Endothelial cell of umbilical vein (primary cell): ENCODE measurements at regions of chr2 and their contacts with region 1.

Region 1: DNA sequence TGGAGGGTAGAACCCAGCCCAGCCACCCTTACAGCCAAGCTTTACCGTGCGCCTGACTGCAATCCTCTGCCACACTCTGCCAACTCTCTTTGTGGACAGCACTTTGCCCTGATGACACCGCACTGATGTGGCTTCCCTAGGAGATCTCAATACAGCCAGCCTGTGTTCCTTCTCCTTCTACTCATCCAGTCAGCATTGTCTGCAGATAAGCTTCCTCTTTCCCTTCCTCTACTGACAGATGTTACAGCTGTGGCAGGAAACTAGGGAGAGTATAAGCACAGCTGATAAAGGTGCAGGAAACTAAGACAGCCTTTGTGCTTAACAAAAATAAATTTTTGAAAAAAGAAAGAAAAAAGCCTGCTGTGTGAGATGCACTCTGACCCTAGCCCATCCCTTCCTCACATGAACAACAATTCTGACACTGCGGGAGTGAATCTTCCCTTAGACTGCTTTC is 25.0 kb downstream of the CEP68 start:
- DNase-seq: peak; percentile 84
- H3K4me3 ChIP-seq: no peak overlapping the region
- H3K27ac ChIP-seq: peak overlapping the region; percentile 37
- H3K4me1 ChIP-seq: peaks cover 17% of the 10 kb centered on the region
- H3K27me3 ChIP-seq: no peaks in the 10 kb centered on the region
- CTCF ChIP-seq: no peak
- POLR2A ChIP-seq: peak; percentile 63

Region 2: GRCh38 chr2:64797881-64798575 is 283.2 kb before region 1 on chr2:
- CTCF ChIA-PET with region 1: no interaction called
- POLR2A ChIA-PET with region 1: no interaction called
- dilution Hi-C with region 1: no loop called
- intact Hi-C with region 1: no loop called
- DNase-seq: peak; percentile 77
- H3K4me3 ChIP-seq: no peak overlapping the region
- H3K27ac ChIP-seq: peak overlapping the region; percentile 30
- H3K4me1 ChIP-seq: peaks cover 65% of the 10 kb centered on the region
- H3K27me3 ChIP-seq: no peaks in the 10 kb centered on the region
- CTCF ChIP-seq: no peak
- POLR2A ChIP-seq: no peak

Region 3: GRCh38 chr2:64888591-64889309 is 192.5 kb before region 1 on chr2:
- CTCF ChIA-PET with region 1: no interaction called
- POLR2A ChIA-PET with region 1: no interaction called
- dilution Hi-C with region 1: no loop called
- intact Hi-C with region 1: no loop called
- DNase-seq: peak; percentile 25
- H3K4me3 ChIP-seq: no peak overlapping the region
- H3K27ac ChIP-seq: no peak overlapping the region
- H3K4me1 ChIP-seq: no peaks in the 10 kb centered on the region
- H3K27me3 ChIP-seq: peaks cover 0 to 2% of the 10 kb centered on the region in 2 experiments
- CTCF ChIP-seq: peak in 1 of 2 donors; percentile 17
- POLR2A ChIP-seq: no peak

Region 4: GRCh38 chr2:65056215-65057053 is 24.8 kb before region 1 on chr2 and contains the start of gene CEP68:
- CTCF ChIA-PET with region 1: interaction called, 3 read pairs
- POLR2A ChIA-PET with region 1: interaction called, 10 read pairs
- dilution Hi-C with region 1: no loop called
- intact Hi-C with region 1: no loop called
- DNase-seq: peak; percentile 99
- H3K4me3 ChIP-seq: peak within 1 kb of the TSS; percentile 74 to 96 (median 78)
- H3K27ac ChIP-seq: peak within 1 kb of the TSS; percentile 81
- H3K4me1 ChIP-seq: peaks cover 33% of the 10 kb centered on the region
- H3K27me3 ChIP-seq: no peaks in the 10 kb centered on the region
- CTCF ChIP-seq: no peak
- POLR2A ChIP-seq: peak; percentile 95
- total RNA-seq, gene CEP68: 20.0 and 21.4 TPM in 2 replicates